ENCODE measurements at regions of chr1 and their contacts with region 1.

Region 1: GRCh38 chr1:66924756-66925557 is at the starts of genes DNAI4 and MIER1:
- DNase-seq: peak; percentile 99
- ATAC-seq: peak; percentile 99
- H3K4me3 ChIP-seq: peak within 1 kb of the TSS; percentile 63 to 96
- H3K27ac ChIP-seq: peak within 1 kb of the TSS; percentile 6 to 100
- H3K4me1 ChIP-seq: peaks cover 0 to 4% of the 10 kb centered on the region in 2 donors
- H3K27me3 ChIP-seq: no peaks in the 10 kb centered on the region
- total RNA-seq, gene DNAI4: 20.8 to 24.2 TPM
- total RNA-seq, gene MIER1: 54.6 to 55.7 TPM

Region 2: GRCh38 chr1:66676613-66677298 is 248.2 kb before region 1 on chr1:
- intact Hi-C with region 1: loop called in 1 of 2 experiments (anchors 5 kb)
- DNase-seq: no peak
- ATAC-seq: peak; percentile 80
- H3K4me3 ChIP-seq: no peak overlapping the region
- H3K27ac ChIP-seq: peak overlapping the region; percentile 40 to 96
- H3K4me1 ChIP-seq: peaks cover 5 to 6% of the 10 kb centered on the region in 2 donors
- H3K27me3 ChIP-seq: no peaks in the 10 kb centered on the region

Region 3: DNA sequence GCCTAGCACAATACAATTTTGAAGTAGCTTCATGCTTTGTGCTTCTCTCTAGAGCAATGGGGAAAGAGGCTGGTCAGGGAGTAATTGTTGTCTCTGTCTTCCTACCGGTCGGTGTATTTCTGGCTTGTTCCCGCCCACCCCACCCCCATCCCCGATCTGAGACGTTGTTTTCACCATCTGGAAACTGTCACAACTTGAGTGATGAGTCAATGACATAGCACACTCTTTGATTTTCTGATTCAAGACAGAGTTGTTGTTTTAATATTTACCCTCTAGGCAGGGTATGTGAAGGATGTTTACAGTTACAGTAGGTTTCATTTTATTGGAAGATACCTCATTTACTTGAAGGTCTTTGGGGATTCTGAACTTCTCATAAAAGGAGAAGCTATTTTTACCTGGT is 389.7 kb after region 1 on chr1:
- intact Hi-C with region 1: no loop called
- DNase-seq: no peak
- ATAC-seq: no peak
- H3K4me3 ChIP-seq: no peak overlapping the region
- H3K27ac ChIP-seq: no peak overlapping the region
- H3K4me1 ChIP-seq: no peaks in the 10 kb centered on the region
- H3K27me3 ChIP-seq: no peaks in the 10 kb centered on the region

Measured in aorta (tissue), 5 donors.